Sciatic nerve (tissue), 2 donors: ENCODE measurements at regions of chr20 and their contacts with region 1.

Region 1: DNA sequence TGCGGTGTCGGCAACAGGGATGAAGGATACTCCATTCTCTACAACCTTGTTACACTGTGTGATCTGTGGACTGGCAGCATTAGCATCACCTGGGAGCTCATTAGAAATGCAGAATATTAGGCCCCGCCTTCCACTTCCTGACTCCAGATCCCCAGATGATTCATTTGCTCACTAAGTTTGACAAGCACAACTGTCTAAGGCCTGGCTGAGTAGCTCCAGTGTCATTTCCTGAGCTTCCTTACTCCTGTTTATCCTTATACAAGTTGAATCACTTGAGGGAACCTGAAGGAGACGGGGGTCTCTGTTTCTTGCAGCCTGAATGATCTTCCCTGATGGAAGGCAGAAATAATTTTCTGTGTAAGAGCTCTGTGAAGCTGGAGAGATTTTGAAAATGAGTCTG is 32.7 kb upstream of the PROKR2 start:
- DNase-seq: no peak
- ATAC-seq: no peak

Region 2: GRCh38 chr20:5491455-5491854 is 142.0 kb after region 1 on chr20:
- intact Hi-C with region 1: no loop called
- DNase-seq: no peak
- ATAC-seq: no peak

Region 3: DNA sequence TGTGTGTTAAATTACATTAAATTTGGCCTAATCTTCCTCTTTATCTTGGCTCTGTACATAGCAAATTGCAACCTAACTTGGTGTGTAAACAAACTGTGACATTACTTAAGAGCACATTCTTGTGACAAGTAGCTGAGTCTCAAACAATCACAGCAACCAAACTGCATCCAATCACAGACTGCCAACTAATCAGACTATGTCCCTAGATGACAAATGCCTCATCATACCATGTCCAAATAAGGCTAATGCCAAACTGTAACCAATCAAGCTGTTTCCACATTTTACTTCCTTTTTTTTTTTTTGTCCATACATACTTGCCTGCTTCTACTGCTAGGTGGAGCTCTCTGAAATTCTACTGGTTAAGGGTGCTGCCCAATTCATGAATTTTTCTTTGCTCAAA is 1627.1 kb after region 1 on chr20:
- intact Hi-C with region 1: loop called (anchors 10 kb)
- DNase-seq: no peak
- ATAC-seq: no peak